Spleen (tissue), 13 donors: ENCODE measurements at regions of chr3 and their contacts with region 1.

Region 1: GRCh38 chr3:71069797-71070196 is 513.7 kb downstream of the FOXP1 start:
- DNase-seq: peak; percentile 84
- H3K4me3 ChIP-seq: no peak overlapping the region
- H3K27ac ChIP-seq: peak overlapping the region in 4 of 8 donors; percentile 1 to 94 (median 39)
- H3K4me1 ChIP-seq: peaks cover 39 to 96% (median 67%) of the 10 kb centered on the region in 6 donors
- H3K27me3 ChIP-seq: no peaks in the 10 kb centered on the region
- CTCF ChIP-seq: peak in 10 of 11 experiments; percentile 15 to 68 (median 54)
- POLR2A ChIP-seq: no peak

Region 2: GRCh38 chr3:70824078-70824477 is 245.7 kb before region 1 on chr3:
- intact Hi-C with region 1: no loop called
- DNase-seq: no peak
- H3K4me3 ChIP-seq: no peak overlapping the region
- H3K27ac ChIP-seq: no peak overlapping the region
- H3K4me1 ChIP-seq: no peaks in the 10 kb centered on the region
- H3K27me3 ChIP-seq: no peaks in the 10 kb centered on the region
- CTCF ChIP-seq: no peak
- POLR2A ChIP-seq: no peak

Region 3: GRCh38 chr3:71006810-71007785 is 62.7 kb before region 1 on chr3:
- intact Hi-C with region 1: loop called (anchors 5 kb)
- DNase-seq: no peak
- H3K4me3 ChIP-seq: no peak overlapping the region
- H3K27ac ChIP-seq: peak overlapping the region in 3 of 8 donors; percentile 5 to 43 (median 42)
- H3K4me1 ChIP-seq: peaks cover 25 to 80% (median 48%) of the 10 kb centered on the region in 6 donors
- H3K27me3 ChIP-seq: no peaks in the 10 kb centered on the region
- CTCF ChIP-seq: peak in 9 of 11 experiments; percentile 11 to 57 (median 41)
- POLR2A ChIP-seq: no peak

Region 4: DNA sequence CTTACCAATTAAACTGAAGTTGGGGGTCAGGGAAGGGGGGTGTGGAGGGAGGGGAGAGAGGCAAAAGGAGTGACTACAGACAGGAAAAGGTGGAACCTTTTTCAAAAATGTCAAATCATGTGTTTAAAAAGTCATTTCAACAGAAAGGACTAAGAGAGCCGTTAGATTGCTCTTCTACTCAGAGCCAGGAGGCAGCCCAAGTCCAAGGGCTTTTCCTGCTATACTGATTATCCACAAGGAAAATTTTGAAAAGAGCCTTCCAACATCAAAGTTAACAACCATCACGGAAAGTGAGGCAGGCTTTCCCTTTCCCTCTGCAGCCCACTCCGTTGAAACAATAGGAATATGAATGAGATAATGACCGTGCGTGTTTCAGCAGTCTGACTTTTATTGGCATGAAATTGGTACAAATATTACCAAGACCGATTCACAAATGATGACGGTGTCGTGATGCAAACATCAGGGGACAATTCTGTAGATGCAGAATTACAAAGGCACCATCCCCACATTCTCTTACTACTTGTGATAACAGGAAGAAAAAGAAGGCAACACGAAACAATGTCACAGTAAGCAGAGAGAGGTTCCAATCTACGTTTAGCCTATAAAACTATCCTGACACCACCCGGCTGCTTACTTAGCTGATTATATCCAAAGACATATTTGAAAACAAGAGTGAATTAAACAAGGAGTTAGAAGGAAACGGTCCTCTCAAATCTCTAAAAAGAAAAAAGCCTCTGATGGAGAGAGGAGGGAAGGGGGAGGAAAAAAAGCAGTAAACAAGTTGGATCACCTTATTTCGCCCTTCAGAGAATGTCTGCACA is 60.0 kb after region 1 on chr3:
- intact Hi-C with region 1: loop called (anchors 10 kb)
- DNase-seq: no peak
- H3K4me3 ChIP-seq: peak overlapping the region; percentile 39 to 72 (median 48)
- H3K27ac ChIP-seq: peak overlapping the region; percentile 80 to 95 (median 90)
- H3K4me1 ChIP-seq: peaks cover 33 to 92% (median 65%) of the 10 kb centered on the region in 6 donors
- H3K27me3 ChIP-seq: no peaks in the 10 kb centered on the region
- CTCF ChIP-seq: no peak
- POLR2A ChIP-seq: no peak

Region 5: GRCh38 chr3:71195492-71195891 is 125.7 kb after region 1 on chr3:
- intact Hi-C with region 1: no loop called
- DNase-seq: no peak
- H3K4me3 ChIP-seq: no peak overlapping the region
- H3K27ac ChIP-seq: no peak overlapping the region
- H3K4me1 ChIP-seq: peaks cover 0 to 5% (median 0%) of the 10 kb centered on the region in 6 donors
- H3K27me3 ChIP-seq: no peaks in the 10 kb centered on the region
- CTCF ChIP-seq: no peak
- POLR2A ChIP-seq: no peak